ENCODE measurements at regions of chr1 and their contacts with region 1.

Region 1: GRCh38 chr1:109277434-109278204 is 5.3 kb downstream of the PSRC1 start:
- DNase-seq: peak; percentile 77
- H3K4me3 Mint-ChIP-seq: no peak overlapping the region
- H3K27ac Mint-ChIP-seq: peak overlapping the region; percentile 24
- H3K4me1 Mint-ChIP-seq: peaks cover 37% of the 10 kb centered on the region
- H3K27me3 Mint-ChIP-seq: no peaks in the 10 kb centered on the region

Region 2: DNA sequence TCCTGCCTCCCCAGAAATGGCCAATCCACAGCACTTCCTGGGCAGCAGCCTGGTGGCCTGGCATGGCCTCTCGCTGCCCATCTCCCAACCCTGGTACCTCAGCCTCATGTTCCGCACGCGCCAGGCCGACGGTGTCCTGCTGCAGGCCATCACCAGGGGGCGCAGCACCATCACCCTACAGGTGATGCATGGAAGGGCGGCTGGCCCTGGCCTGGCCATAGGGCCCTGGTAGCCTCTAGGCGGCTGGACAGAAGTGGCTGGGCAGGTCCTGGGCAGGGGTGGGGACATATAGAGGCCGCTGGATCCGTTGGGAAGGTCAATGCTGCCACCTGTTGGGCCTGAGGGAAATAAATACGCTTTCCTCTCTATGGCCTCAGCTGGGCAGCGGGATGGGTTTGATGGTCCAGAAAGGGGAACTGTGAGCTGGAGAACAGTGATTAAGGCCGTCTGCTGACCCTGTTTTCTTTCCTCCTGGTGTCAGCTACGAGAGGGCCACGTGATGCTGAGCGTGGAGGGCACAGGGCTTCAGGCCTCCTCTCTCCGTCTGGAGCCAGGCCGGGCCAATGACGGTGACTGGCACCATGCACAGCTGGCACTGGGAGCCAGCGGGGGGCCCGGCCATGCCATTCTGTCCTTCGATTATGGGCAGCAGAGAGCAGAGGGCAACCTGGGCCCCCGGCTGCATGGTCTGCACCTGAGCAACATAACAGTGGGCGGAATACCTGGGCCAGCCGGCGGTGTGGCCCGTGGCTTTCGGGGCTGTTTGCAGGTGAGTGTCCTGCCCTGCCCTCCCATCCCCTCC is 13.8 kb before region 1 on chr1:
- CTCF ChIA-PET with region 1: interaction called, 10 read pairs
- POLR2A ChIA-PET with region 1: no interaction called
- DNase-seq: peak; percentile 79
- H3K4me3 Mint-ChIP-seq: no peak overlapping the region
- H3K27ac Mint-ChIP-seq: no peak overlapping the region
- H3K4me1 Mint-ChIP-seq: peaks cover 2% of the 10 kb centered on the region
- H3K27me3 Mint-ChIP-seq: no peaks in the 10 kb centered on the region

Region 3: GRCh38 chr1:109370712-109371455 is 93.3 kb after region 1 on chr1:
- CTCF ChIA-PET with region 1: interaction called, 10 read pairs
- POLR2A ChIA-PET with region 1: interaction called, 8 read pairs
- DNase-seq: no peak
- H3K4me3 Mint-ChIP-seq: peak overlapping the region; percentile 31
- H3K27ac Mint-ChIP-seq: peak overlapping the region; percentile 37
- H3K4me1 Mint-ChIP-seq: peaks cover 60% of the 10 kb centered on the region
- H3K27me3 Mint-ChIP-seq: peaks cover 24% of the 10 kb centered on the region